Activated CD4-positive, alpha-beta memory T cell treated with anti-CD3 and anti-CD28 coated beads, Interleukin-2, amount 10 ng/mL, durations not matched to agents 7 days and 5 days (primary cell): ENCODE measurements at regions of chr1 and their contacts with region 1.

Region 1: DNA sequence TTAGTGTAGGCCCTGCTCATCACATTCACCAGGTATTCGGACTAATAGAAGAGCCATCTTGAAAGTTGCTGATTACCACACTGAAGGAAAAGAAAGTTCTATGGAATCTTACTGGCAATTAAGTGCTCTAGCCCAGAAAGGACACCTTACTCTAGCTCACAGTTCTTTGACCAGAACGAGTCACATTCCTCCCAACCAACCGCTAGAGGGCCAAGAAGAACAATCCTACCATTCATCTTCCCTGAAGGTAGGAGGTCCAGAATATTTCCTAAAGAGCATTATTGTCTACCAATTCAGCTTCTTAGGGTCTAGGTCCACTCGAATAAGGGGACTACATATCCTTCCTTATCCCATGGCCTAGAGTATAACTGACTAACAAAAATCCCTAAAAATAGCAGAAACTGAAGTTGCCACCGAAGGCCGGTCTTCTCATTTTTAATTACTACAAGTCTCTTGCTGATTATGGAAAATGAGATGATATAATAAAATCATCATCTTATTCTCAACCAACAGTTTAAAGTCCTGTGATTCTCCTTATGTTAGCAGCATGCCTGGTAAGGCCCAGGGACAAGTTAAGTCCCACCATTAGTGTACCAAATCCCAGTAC is 2.7 kb upstream of the FMO1 start:
- DNase-seq: no peak
- H3K4me3 Mint-ChIP-seq: no peak overlapping the region
- H3K27ac Mint-ChIP-seq: no peak overlapping the region
- H3K4me1 Mint-ChIP-seq: no peaks in the 10 kb centered on the region
- H3K27me3 Mint-ChIP-seq: peaks cover 52% of the 10 kb centered on the region

Region 2: GRCh38 chr1:171141688-171142415 is 103.7 kb before region 1 on chr1:
- CTCF ChIA-PET with region 1: no interaction called
- POLR2A ChIA-PET with region 1: no interaction called
- DNase-seq: no peak
- H3K4me3 Mint-ChIP-seq: no peak overlapping the region
- H3K27ac Mint-ChIP-seq: no peak overlapping the region
- H3K4me1 Mint-ChIP-seq: no peaks in the 10 kb centered on the region
- H3K27me3 Mint-ChIP-seq: peaks cover 7% of the 10 kb centered on the region

Region 3: DNA sequence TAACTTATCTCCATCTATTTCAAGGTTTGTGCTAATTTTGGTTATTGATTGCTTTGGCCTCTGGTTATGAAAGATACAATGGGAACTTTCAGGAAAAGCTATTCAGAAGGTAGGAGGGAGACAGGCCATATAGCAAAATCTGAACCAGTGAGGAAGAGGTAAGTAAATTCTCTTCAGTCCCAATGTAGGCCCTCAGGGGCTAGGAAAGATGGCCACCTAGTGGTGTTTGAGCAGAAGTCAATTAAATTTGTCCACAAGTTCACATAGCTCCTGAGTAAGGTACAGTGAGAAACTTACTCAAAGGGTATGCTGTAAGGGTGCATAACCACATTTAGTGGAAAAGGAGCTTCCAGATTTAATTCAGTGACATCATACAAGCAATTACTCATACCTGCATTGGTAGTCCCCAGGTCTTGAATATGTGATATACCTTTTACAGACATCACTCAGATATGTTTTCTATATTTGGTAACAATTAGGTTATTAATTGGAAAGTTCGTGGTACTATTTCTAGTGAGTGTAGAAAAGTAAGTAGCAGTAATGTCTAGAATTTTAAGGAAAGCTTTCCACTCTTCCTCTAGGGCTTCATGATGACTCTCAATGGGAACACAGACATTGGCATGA is 18.7 kb before region 1 on chr1:
- CTCF ChIA-PET with region 1: interaction called, 13 read pairs
- POLR2A ChIA-PET with region 1: no interaction called
- DNase-seq: peak; percentile 24
- H3K4me3 Mint-ChIP-seq: no peak overlapping the region
- H3K27ac Mint-ChIP-seq: no peak overlapping the region
- H3K4me1 Mint-ChIP-seq: peaks cover under 1% of the 10 kb centered on the region
- H3K27me3 Mint-ChIP-seq: peaks cover 3% of the 10 kb centered on the region

Region 4: DNA sequence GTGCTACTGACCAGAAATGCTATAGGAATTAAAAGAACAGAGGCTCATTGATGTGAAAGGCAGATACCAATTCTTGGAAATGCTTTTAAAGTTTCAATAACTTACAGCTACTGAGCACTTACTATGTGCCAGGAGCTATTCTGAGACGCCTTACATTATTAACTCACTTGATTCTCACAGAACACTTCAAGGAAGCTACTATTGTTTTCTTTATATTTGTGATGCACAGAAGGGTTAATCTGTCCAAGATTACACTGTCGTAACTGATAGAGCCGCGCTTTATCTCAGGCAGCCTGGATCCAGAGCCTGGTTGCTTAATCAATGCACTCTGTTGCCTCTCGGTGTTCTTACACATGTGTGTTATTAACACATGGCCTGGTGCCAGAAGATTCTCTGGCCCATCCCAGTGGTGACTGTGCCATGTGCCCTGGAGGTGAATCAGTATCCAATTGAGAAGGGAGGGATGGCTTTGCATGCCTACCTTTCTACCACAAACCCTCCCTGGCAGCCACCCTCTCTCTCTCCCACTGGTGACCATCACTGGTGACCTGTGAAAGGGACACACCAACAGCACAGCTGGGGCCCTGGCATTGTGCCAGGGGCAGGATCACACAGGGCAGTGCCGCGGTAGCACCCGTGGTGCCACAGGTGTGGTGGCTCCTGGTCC is 11.5 kb after region 1 on chr1:
- CTCF ChIA-PET with region 1: interaction called, 10 read pairs
- POLR2A ChIA-PET with region 1: no interaction called
- DNase-seq: no peak
- H3K4me3 Mint-ChIP-seq: no peak overlapping the region
- H3K27ac Mint-ChIP-seq: no peak overlapping the region
- H3K4me1 Mint-ChIP-seq: peaks cover 10% of the 10 kb centered on the region
- H3K27me3 Mint-ChIP-seq: peaks cover 20% of the 10 kb centered on the region

Region 5: DNA sequence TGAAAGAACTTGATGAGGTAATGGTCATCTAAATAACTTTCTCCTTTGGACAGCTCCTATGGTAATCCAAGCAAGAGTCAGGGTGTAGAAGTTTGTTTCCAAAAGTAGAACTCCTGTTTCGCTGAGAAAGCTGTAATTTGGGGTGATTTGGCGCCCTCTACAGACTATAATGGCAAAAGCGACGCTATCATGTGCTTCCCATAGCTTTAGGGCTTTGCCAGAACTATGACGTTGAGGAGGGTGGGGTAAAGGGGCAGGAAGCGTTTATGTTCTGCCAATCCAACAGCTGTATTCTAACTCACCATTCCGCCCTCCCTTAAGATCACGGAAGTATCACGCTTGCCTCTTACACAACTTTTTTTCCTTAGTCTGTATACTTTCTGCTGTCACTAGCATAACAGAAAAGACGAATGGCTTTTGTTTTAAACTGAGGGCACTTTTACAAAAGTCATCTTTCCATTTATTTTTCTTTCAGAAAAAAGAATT is 68.3 kb after region 1 on chr1 and contains the start of gene FMO4:
- CTCF ChIA-PET with region 1: interaction called, 40 read pairs
- POLR2A ChIA-PET with region 1: no interaction called
- DNase-seq: peak; percentile 85
- H3K4me3 Mint-ChIP-seq: peak within 1 kb of the TSS; percentile 66
- H3K27ac Mint-ChIP-seq: peak within 1 kb of the TSS; percentile 40
- H3K4me1 Mint-ChIP-seq: peaks cover 16% of the 10 kb centered on the region
- H3K27me3 Mint-ChIP-seq: no peaks in the 10 kb centered on the region
- total RNA-seq, gene FMO4: 1.2 to 1.8 TPM

Region 6: GRCh38 chr1:171434717-171435346 is 189.3 kb after region 1 on chr1:
- CTCF ChIA-PET with region 1: no interaction called
- POLR2A ChIA-PET with region 1: no interaction called
- DNase-seq: no peak
- H3K4me3 Mint-ChIP-seq: no peak overlapping the region
- H3K27ac Mint-ChIP-seq: peak overlapping the region; percentile 54
- H3K4me1 Mint-ChIP-seq: peaks cover 10% of the 10 kb centered on the region
- H3K27me3 Mint-ChIP-seq: no peaks in the 10 kb centered on the region

Region 7: DNA sequence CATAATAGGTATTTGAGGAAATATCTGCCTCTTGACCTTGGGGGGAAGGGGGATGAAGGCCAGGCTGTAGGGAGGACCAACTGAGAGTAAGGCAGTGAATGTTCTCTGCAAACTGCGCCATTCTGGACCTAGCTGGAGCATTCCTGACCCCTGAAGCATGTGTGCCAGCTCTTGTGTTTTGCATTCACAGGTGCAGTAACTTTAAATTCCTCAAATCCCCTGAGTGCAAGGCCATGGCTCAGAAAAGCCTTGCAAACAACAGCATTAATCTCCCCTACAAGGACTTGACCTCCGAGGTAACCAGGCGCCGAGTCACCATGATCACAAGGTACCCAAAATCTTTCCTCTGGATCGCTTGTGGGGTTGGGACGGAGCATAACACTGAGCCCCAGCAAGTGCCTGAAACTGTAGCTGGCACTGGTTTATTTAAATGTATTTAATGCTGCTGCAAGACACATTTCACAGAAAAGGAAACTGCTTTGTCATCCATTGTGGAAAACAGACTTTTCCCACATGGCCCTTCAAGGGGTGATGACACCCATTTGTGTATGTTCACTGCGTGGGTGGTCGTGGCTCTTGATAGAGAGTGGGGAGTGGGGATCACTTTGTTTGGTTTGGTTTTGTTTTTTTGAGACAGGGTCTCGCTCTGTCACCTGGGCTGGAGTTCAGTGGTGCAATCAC is 378.2 kb after region 1 on chr1:
- CTCF ChIA-PET with region 1: no interaction called
- POLR2A ChIA-PET with region 1: no interaction called
- DNase-seq: no peak
- H3K4me3 Mint-ChIP-seq: no peak overlapping the region
- H3K27ac Mint-ChIP-seq: no peak overlapping the region
- H3K4me1 Mint-ChIP-seq: no peaks in the 10 kb centered on the region
- H3K27me3 Mint-ChIP-seq: peaks cover 7% of the 10 kb centered on the region